ENCODE measurements at regions of chr13 and their contacts with region 1.

Region 1: GRCh38 chr13:113029487-113030258 is 60.7 kb downstream of the MCF2L start:
- DNase-seq: no peak
- H3K4me3 ChIP-seq: no peak overlapping the region
- H3K27me3 ChIP-seq: peaks cover 9% of the 10 kb centered on the region
- CTCF ChIP-seq: peak; percentile 93

Region 2: DNA sequence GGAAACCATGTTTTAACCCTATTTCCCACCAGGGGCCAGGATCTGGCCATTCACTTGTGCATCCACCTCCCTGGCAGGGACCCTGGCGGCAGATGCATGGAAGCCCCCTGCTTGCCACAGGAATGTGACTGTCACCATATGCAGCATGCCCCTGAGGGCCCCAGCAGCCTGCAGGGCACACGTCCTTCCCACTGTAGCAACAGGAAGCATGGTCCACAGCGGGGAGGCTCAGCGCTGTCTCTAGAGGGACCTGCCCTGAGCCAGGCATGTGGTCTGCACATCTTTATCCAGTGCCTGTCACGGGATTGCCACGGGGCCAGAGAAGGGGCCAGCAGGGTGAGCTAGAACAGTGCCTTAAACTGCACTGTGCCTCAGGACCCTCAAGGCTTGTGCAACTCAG is 95.6 kb before region 1 on chr13:
- CTCF ChIA-PET with region 1: interaction called, 16 read pairs
- POLR2A ChIA-PET with region 1: no interaction called
- DNase-seq: no peak
- H3K4me3 ChIP-seq: no peak overlapping the region
- H3K27me3 ChIP-seq: peaks cover 12% of the 10 kb centered on the region
- CTCF ChIP-seq: no peak

Region 3: GRCh38 chr13:112942689-112943308 is 86.9 kb before region 1 on chr13:
- CTCF ChIA-PET with region 1: interaction called, 16 read pairs
- POLR2A ChIA-PET with region 1: no interaction called
- DNase-seq: peak; percentile 57
- H3K4me3 ChIP-seq: peak overlapping the region; percentile 39
- H3K27me3 ChIP-seq: peaks cover 18% of the 10 kb centered on the region
- CTCF ChIP-seq: peak; percentile 97

Measured in BJ (cell line).